ENCODE measurements at regions of chr2 and their contacts with region 1.

Region 1: GRCh38 chr2:209334198-209335017 is 89.4 kb upstream of the MAP2 start:
- DNase-seq: peak; percentile 63
- H3K4me3 Mint-ChIP-seq: no peak overlapping the region
- H3K27ac Mint-ChIP-seq: no peak overlapping the region
- H3K4me1 Mint-ChIP-seq: no peaks in the 10 kb centered on the region
- H3K27me3 Mint-ChIP-seq: no peaks in the 10 kb centered on the region

Region 2: DNA sequence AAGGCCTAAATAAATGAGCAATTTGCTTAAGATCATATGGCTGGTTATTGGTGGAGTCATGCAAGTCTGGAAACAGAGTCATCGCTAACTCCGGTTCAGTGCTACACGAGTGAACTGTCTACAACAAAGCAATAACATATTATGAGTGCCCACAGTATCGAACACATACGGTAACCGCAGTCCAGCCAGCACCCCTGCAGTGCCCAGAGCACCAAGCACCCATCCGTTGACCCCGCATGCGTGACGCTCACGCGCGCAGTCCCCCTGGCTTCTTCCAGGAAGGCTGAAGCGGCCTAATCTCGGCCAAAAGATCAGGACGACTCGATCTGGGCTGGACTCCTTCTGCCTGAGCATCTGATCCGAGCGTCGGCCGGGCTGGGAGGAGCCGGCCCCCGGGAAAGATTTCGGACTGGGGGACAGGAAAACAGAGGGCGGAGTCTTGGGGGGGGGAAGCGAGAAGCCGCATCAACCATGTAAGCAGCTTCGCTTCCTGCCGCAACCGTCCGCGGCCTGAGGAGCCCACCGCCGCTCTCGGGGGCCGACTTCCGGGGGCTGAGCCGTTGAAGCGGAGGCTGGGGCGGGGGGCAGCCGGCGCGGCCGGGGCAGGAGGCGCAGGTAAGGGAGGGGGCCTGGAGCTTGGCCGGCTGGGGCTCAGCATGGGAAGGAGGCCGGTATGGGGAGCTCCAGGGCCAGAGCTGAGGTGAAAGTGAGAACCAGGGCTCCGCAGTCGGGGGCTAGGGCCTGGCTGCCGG is 1068.4 kb before region 1 on chr2 and contains the start of gene PIKFYVE:
- CTCF ChIA-PET with region 1: no interaction called
- intact Hi-C with region 1: loop called (anchors 5 kb)
- DNase-seq: peak; percentile 94
- H3K4me3 Mint-ChIP-seq: peak within 1 kb of the TSS; percentile 95
- H3K27ac Mint-ChIP-seq: peak within 1 kb of the TSS; percentile 94
- H3K4me1 Mint-ChIP-seq: peaks cover 33% of the 10 kb centered on the region
- H3K27me3 Mint-ChIP-seq: no peaks in the 10 kb centered on the region
- total RNA-seq, gene PIKFYVE: 20.2 to 22.4 TPM

Region 3: GRCh38 chr2:208392300-208393080 is 941.9 kb before region 1 on chr2:
- CTCF ChIA-PET with region 1: interaction called, 5 read pairs
- intact Hi-C with region 1: loop called (anchors 1 kb)
- DNase-seq: no peak
- H3K4me3 Mint-ChIP-seq: no peak overlapping the region
- H3K27ac Mint-ChIP-seq: no peak overlapping the region
- H3K4me1 Mint-ChIP-seq: no peaks in the 10 kb centered on the region
- H3K27me3 Mint-ChIP-seq: peaks cover 8% of the 10 kb centered on the region

Region 4: DNA sequence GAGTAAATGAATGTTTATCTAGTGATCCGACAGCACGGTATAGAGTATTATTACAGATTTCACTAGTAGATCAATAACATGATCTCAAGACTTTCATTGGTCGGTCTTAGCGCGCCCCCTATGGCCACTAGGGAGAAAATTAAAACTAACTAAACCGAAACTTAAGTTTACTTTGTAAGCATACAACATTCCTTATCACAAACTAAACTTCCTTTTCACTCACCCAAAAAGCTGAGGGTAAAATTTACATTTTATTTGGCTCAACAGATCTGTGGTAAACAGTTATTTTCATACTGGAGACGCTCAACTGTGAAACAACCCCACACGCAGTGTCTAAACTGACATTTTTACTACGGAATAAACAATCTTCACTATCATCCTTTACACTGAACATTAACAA is 126.2 kb before region 1 on chr2:
- CTCF ChIA-PET with region 1: no interaction called
- intact Hi-C with region 1: no loop called
- DNase-seq: peak; percentile 23
- H3K4me3 Mint-ChIP-seq: no peak overlapping the region
- H3K27ac Mint-ChIP-seq: no peak overlapping the region
- H3K4me1 Mint-ChIP-seq: no peaks in the 10 kb centered on the region
- H3K27me3 Mint-ChIP-seq: no peaks in the 10 kb centered on the region

Region 5: DNA sequence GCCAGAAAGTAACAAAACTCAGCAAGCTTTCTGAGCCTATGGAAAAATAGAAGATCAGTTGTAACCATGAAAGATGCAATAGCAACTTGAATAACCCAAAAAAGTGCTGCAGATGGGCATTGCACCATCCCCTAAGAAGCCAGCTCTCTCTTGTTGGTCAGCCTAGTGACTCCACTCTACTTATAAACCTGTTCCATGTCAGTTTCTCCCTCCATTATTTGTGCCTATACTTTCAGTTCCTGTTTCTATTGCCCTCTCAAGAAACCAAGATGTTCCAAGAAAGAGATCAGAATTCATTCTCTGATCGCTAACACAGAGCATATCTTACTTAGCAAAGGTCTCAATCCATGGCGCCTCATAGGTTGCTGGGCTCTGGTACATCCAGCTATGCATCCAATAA is 80.9 kb before region 1 on chr2:
- CTCF ChIA-PET with region 1: no interaction called
- intact Hi-C with region 1: no loop called
- DNase-seq: no peak
- H3K4me3 Mint-ChIP-seq: no peak overlapping the region
- H3K27ac Mint-ChIP-seq: no peak overlapping the region
- H3K4me1 Mint-ChIP-seq: no peaks in the 10 kb centered on the region
- H3K27me3 Mint-ChIP-seq: no peaks in the 10 kb centered on the region

Region 6: DNA sequence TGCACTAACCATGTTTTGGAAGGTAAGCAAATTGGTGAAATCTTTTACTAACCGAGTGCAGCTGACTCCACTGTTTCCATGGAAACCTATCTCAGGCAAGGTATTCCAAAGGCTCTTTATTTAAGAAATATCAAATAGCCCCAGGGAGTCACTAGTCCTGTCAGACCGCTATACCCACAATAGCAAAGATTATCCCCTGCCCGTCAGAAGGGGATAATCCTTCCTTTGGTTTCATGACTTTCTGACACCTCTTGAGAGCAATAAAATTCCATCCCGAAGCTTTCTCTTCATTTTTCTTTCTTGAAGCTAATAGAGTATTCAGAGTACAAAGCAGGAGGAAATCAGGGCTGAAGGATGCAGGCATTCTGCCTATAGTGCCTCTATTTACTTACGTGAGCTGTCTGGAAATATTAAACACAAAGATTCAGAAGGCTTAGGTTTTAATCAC is 54.8 kb after region 1 on chr2:
- CTCF ChIA-PET with region 1: interaction called, 11 read pairs
- intact Hi-C with region 1: no loop called
- DNase-seq: no peak
- H3K4me3 Mint-ChIP-seq: no peak overlapping the region
- H3K27ac Mint-ChIP-seq: no peak overlapping the region
- H3K4me1 Mint-ChIP-seq: no peaks in the 10 kb centered on the region
- H3K27me3 Mint-ChIP-seq: no peaks in the 10 kb centered on the region

Region 7: GRCh38 chr2:209556354-209556961 is 222.1 kb after region 1 on chr2:
- CTCF ChIA-PET with region 1: no interaction called
- intact Hi-C with region 1: loop called (anchors 1 kb)
- DNase-seq: no peak
- H3K4me3 Mint-ChIP-seq: no peak overlapping the region
- H3K27ac Mint-ChIP-seq: no peak overlapping the region
- H3K4me1 Mint-ChIP-seq: no peaks in the 10 kb centered on the region
- H3K27me3 Mint-ChIP-seq: no peaks in the 10 kb centered on the region

Region 8: GRCh38 chr2:209960676-209961630 is 626.5 kb after region 1 on chr2:
- CTCF ChIA-PET with region 1: interaction called, 6 read pairs
- intact Hi-C with region 1: loop called (anchors 1 kb)
- DNase-seq: peak; percentile 63
- H3K4me3 Mint-ChIP-seq: no peak overlapping the region
- H3K27ac Mint-ChIP-seq: no peak overlapping the region
- H3K4me1 Mint-ChIP-seq: no peaks in the 10 kb centered on the region
- H3K27me3 Mint-ChIP-seq: no peaks in the 10 kb centered on the region